Activated CD8-positive, alpha-beta T cell treated with anti-CD3 and anti-CD28 coated beads for 36 hours (primary cell): ENCODE measurements at regions of chr4 and their contacts with region 1.

Region 1: DNA sequence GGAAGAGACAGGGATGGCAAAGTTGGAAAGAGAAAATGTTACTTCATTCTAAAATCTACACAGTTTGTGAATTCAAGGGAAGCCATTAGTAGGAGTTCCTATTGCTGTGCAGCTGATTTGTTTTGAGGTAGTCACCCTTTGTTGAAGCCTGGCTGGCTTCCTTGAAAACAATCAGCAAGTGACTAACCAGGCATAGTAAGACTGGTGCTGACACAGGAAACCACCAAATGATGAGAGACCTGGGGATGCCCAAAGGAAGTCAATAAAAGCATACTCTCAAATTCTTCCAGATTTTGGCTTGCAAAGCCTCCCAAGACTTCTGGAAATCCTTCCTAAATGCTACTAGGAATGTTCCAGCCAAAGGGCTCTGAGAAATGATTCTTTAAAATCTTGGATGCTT is 23.9 kb upstream of the PRDM8 start:
- DNase-seq: peak; percentile 75
- ATAC-seq: peak; percentile 86
- H3K4me3 Mint-ChIP-seq: peak overlapping the region; percentile 38
- H3K27ac Mint-ChIP-seq: peak overlapping the region; percentile 90
- H3K4me1 Mint-ChIP-seq: peaks cover 53% of the 10 kb centered on the region
- H3K27me3 Mint-ChIP-seq: no peaks in the 10 kb centered on the region
- CTCF ChIP-seq: no peak

Region 2: GRCh38 chr4:80072744-80073472 is 100.5 kb before region 1 on chr4 and contains the start of gene ANTXR2:
- CTCF ChIA-PET with region 1: interaction called, 11 read pairs
- POLR2A ChIA-PET with region 1: no interaction called
- intact Hi-C with region 1: loop called (anchors 2 kb)
- DNase-seq: peak; percentile 76
- ATAC-seq: peak; percentile 69
- H3K4me3 Mint-ChIP-seq: peak within 1 kb of the TSS; percentile 88
- H3K27ac Mint-ChIP-seq: peak within 1 kb of the TSS; percentile 89
- H3K4me1 Mint-ChIP-seq: peaks cover 73% of the 10 kb centered on the region
- H3K27me3 Mint-ChIP-seq: no peaks in the 10 kb centered on the region
- CTCF ChIP-seq: no peak
- total RNA-seq, gene ANTXR2: 3.0 to 3.6 TPM

Region 3: GRCh38 chr4:80101792-80102116 is 71.6 kb before region 1 on chr4:
- CTCF ChIA-PET with region 1: no interaction called
- POLR2A ChIA-PET with region 1: no interaction called
- intact Hi-C with region 1: loop called (anchors 2 kb)
- DNase-seq: no peak
- ATAC-seq: no peak
- H3K4me3 Mint-ChIP-seq: no peak overlapping the region
- H3K27ac Mint-ChIP-seq: no peak overlapping the region
- H3K4me1 Mint-ChIP-seq: peaks cover 9% of the 10 kb centered on the region
- H3K27me3 Mint-ChIP-seq: no peaks in the 10 kb centered on the region
- CTCF ChIP-seq: no peak

Region 4: DNA sequence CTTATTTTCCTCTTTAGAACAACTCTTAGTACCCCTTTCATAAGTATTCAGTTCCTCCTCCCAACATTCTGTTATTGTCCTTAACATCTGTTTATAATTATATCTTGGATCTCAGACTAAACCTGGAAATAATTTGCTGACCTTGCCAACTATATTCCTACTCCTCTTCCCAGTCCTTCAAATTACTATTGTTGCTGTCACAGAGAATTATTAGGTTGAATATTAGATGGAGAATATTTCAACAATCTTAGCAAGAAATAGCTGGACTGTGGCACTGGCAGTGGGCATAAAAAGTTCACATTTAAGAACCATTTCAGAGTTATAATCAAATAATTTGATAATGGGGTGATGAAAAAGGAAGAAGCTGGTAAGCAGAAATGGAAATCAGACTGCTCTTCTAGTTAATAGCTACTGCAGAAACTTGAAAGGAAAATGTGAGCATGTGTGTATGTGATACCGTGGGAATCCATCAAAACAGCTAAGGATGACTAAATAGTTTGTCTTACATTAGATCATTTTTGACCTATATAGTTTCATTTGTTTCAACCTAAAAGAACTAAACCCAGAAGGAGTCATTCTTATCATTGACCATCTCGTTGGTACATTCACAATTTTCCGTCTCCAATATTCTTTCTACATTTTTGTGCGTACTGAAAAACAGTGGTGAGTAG is 19.4 kb before region 1 on chr4:
- CTCF ChIA-PET with region 1: interaction called, 11 read pairs
- POLR2A ChIA-PET with region 1: interaction called, 6 read pairs
- intact Hi-C with region 1: loop called (anchors 1 kb)
- DNase-seq: no peak
- ATAC-seq: peak; percentile 89
- H3K4me3 Mint-ChIP-seq: peak overlapping the region; percentile 30
- H3K27ac Mint-ChIP-seq: peak overlapping the region; percentile 91
- H3K4me1 Mint-ChIP-seq: peaks cover 34% of the 10 kb centered on the region
- H3K27me3 Mint-ChIP-seq: no peaks in the 10 kb centered on the region
- CTCF ChIP-seq: no peak